Activated CD4-positive, alpha-beta memory T cell treated with anti-CD3 and anti-CD28 coated beads for 36 hours (primary cell): ENCODE measurements at regions of chr2 and their contacts with region 1.

Region 1: GRCh38 chr2:15177103-15177502 is 384.0 kb downstream of the NBAS start:
- DNase-seq: peak; percentile 85
- H3K4me3 Mint-ChIP-seq: peak overlapping the region; percentile 18
- H3K27ac Mint-ChIP-seq: peak overlapping the region; percentile 19
- H3K4me1 Mint-ChIP-seq: peaks cover 49% of the 10 kb centered on the region
- H3K27me3 Mint-ChIP-seq: peaks cover 8% of the 10 kb centered on the region

Region 2: GRCh38 chr2:14616342-14616741 is 560.8 kb before region 1 on chr2:
- CTCF ChIA-PET with region 1: no interaction called
- POLR2A ChIA-PET with region 1: no interaction called
- intact Hi-C with region 1: no loop called
- DNase-seq: no peak
- H3K4me3 Mint-ChIP-seq: no peak overlapping the region
- H3K27ac Mint-ChIP-seq: no peak overlapping the region
- H3K4me1 Mint-ChIP-seq: no peaks in the 10 kb centered on the region
- H3K27me3 Mint-ChIP-seq: peaks cover 3% of the 10 kb centered on the region

Region 3: GRCh38 chr2:15074751-15075700 is 102.1 kb before region 1 on chr2:
- CTCF ChIA-PET with region 1: no interaction called
- POLR2A ChIA-PET with region 1: no interaction called
- intact Hi-C with region 1: no loop called
- DNase-seq: no peak
- H3K4me3 Mint-ChIP-seq: no peak overlapping the region
- H3K27ac Mint-ChIP-seq: no peak overlapping the region
- H3K4me1 Mint-ChIP-seq: no peaks in the 10 kb centered on the region
- H3K27me3 Mint-ChIP-seq: peaks cover 6% of the 10 kb centered on the region

Region 4: GRCh38 chr2:15142069-15142873 is 34.8 kb before region 1 on chr2:
- CTCF ChIA-PET with region 1: no interaction called
- POLR2A ChIA-PET with region 1: no interaction called
- intact Hi-C with region 1: loop called (anchors 1 kb)
- DNase-seq: peak; percentile 89
- H3K4me3 Mint-ChIP-seq: peak overlapping the region; percentile 52
- H3K27ac Mint-ChIP-seq: peak overlapping the region; percentile 83
- H3K4me1 Mint-ChIP-seq: peaks cover 28% of the 10 kb centered on the region
- H3K27me3 Mint-ChIP-seq: no peaks in the 10 kb centered on the region

Region 5: DNA sequence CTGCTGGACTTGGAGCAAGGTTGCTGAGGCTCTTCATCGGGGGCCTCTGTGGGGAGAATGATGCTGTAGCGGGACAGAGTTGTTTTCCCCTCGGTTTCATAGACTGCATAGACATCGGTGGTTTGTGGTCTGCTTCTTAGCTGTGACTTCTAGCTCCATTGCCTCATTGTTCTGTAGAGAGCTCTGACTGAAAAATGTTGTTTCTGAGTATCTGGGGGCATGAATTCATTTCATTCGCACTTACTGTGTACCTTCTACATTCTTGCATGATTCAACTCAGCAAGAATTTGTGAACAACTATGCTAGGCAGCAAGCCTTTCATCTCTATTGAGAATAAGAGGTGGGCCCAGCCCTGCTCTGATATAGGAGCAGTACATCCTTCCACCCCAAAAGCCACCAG is 22.8 kb before region 1 on chr2:
- CTCF ChIA-PET with region 1: no interaction called
- POLR2A ChIA-PET with region 1: no interaction called
- intact Hi-C with region 1: no loop called
- DNase-seq: no peak
- H3K4me3 Mint-ChIP-seq: no peak overlapping the region
- H3K27ac Mint-ChIP-seq: no peak overlapping the region
- H3K4me1 Mint-ChIP-seq: no peaks in the 10 kb centered on the region
- H3K27me3 Mint-ChIP-seq: peaks cover 3% of the 10 kb centered on the region

Region 6: GRCh38 chr2:15205562-15205961 is 28.5 kb after region 1 on chr2:
- CTCF ChIA-PET with region 1: no interaction called
- POLR2A ChIA-PET with region 1: no interaction called
- intact Hi-C with region 1: no loop called
- DNase-seq: no peak
- H3K4me3 Mint-ChIP-seq: no peak overlapping the region
- H3K27ac Mint-ChIP-seq: no peak overlapping the region
- H3K4me1 Mint-ChIP-seq: peaks cover 7% of the 10 kb centered on the region
- H3K27me3 Mint-ChIP-seq: no peaks in the 10 kb centered on the region

Region 7: GRCh38 chr2:15378148-15378908 is 201.2 kb after region 1 on chr2:
- CTCF ChIA-PET with region 1: no interaction called
- POLR2A ChIA-PET with region 1: no interaction called
- intact Hi-C with region 1: loop called (anchors 1 kb)
- DNase-seq: no peak
- H3K4me3 Mint-ChIP-seq: no peak overlapping the region
- H3K27ac Mint-ChIP-seq: no peak overlapping the region
- H3K4me1 Mint-ChIP-seq: peaks cover 14% of the 10 kb centered on the region
- H3K27me3 Mint-ChIP-seq: no peaks in the 10 kb centered on the region

Region 8: GRCh38 chr2:15591692-15592463 is 414.8 kb after region 1 on chr2 and contains the start of gene DDX1:
- CTCF ChIA-PET with region 1: no interaction called
- POLR2A ChIA-PET with region 1: no interaction called
- intact Hi-C with region 1: loop called (anchors 5 kb)
- DNase-seq: peak; percentile 91
- H3K4me3 Mint-ChIP-seq: peak within 1 kb of the TSS; percentile 94
- H3K27ac Mint-ChIP-seq: peak within 1 kb of the TSS; percentile 91
- H3K4me1 Mint-ChIP-seq: peaks cover 29% of the 10 kb centered on the region
- H3K27me3 Mint-ChIP-seq: no peaks in the 10 kb centered on the region
- total RNA-seq, gene DDX1: 79.7 to 81.1 TPM